ENCODE measurements at regions of chr3 and their contacts with region 1.

Region 1: DNA sequence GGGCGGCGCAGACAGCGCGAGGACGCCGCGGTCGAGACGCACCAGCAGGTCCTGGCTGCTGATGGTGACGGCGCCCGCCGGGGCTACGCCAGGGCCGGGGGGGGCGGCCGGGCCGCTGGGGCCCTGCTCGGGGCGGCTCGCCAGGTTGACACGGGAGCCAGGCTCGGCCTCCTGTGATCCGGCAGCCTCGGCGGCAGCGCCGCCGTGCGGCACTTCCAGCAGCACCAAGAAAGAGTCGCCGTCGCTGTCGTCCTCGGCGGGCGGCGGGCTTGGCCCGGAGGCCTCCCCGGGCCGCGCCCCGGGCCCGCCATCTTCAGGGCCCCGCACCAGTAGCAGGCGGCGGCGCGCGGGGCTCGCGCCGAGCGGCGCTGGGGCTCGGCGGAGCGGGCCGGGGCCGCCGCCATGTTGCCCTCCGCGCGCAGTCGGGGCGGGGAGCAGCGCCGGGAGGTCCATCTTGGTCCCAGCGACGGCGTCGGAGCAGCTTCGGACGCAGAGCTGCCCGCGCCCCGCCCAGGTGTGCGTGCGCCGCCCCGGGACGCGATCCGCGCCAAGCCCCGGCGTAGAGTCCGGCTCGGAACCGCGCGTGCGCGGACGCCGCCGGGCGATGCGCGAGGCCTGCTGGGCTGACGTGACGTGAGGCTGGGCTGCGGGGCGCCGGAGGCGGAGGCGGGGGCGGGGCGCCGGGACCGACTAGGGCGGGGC is at the start of gene ZXDC:
- DNase-seq: peak; percentile 92
- H3K4me3 Mint-ChIP-seq: peak within 1 kb of the TSS; percentile 93
- H3K27ac Mint-ChIP-seq: peak within 1 kb of the TSS; percentile 88
- H3K4me1 Mint-ChIP-seq: peaks cover 28% of the 10 kb centered on the region
- H3K27me3 Mint-ChIP-seq: peaks cover under 1% of the 10 kb centered on the region
- total RNA-seq, gene ZXDC: 29.2 and 29.4 TPM in 2 replicates

Region 2: DNA sequence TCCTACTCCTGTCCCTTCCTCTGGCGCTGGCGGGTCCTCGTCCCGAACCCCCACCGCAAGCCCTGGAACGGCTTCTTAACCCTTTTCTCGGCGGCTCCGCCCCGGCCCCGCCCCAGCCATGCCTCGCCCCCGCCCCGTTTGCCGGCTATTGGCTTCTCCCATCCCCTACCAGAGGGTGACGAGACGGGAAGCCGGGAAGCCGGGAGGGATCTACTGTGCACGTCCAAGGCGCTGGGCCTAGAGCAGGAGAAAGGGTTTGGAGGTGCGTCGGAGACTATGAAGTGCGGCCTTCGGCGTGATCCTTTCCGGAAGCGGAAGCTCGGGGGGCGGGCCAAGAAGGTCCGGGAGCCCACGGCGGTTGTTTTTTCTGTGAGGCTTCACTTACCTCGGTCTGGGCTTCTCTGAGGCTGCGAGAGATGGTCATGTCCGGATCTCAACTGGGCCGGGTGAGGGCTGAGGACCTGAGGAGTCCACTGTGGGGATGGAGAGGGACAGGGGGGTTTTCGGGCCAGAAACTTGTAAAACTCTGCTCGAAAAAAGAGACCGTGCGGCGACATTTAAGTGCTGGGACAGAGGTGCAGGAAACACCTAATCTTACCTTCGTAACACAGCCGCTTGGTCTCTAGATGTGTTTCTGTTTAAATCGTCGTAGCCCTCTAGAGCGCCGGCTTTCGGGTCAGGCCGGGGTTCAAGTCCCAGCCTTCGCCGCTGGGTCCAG is 485.2 kb before region 1 on chr3:
- intact Hi-C with region 1: loop called (anchors 5 kb)
- DNase-seq: peak; percentile 68
- H3K4me3 Mint-ChIP-seq: peak overlapping the region; percentile 90
- H3K27ac Mint-ChIP-seq: peak overlapping the region; percentile 88
- H3K4me1 Mint-ChIP-seq: peaks cover 16% of the 10 kb centered on the region
- H3K27me3 Mint-ChIP-seq: peaks cover 15% of the 10 kb centered on the region

Region 3: DNA sequence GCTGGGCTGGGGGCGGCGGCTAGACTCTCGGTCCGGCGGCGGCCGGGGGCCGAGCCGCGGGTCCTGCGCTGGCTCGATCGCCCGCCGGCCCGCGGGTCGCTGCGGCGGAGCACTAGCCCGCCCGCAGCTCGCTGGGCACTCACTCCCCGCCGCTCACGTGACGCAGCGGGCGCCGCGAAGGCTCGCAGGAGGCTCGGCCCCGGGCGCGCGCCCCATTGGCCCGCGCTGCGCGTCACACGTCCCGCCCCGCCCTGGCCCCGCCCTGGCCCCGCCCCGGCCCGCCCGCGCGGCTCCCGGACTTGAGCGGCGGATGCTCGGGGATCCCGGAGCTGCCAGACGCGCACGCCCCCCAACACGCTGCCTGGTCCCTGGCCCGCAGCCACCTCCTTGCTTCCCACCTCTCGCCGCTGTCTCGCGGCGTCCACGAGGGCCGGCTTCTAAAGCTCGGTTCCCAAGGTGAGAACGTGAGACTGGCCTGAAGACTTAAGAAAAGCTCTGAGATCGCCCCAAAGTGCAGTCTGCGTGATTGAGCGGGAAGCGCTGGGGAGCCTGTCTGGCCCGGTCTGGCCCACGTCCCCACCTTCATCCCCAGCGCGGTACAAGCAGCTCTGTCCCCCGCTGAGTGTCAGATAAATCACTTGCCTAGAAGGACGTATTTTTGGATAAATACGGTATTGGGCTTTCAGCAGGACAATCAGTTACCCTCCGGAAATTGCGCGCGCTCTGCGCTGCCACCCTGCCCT is 118.1 kb before region 1 on chr3 and contains the start of gene KLF15:
- intact Hi-C with region 1: loop called (anchors 1 kb)
- DNase-seq: peak; percentile 73
- H3K4me3 Mint-ChIP-seq: peak within 1 kb of the TSS; percentile 84
- H3K27ac Mint-ChIP-seq: peak within 1 kb of the TSS; percentile 48
- H3K4me1 Mint-ChIP-seq: peaks cover 8% of the 10 kb centered on the region
- H3K27me3 Mint-ChIP-seq: peaks cover 46% of the 10 kb centered on the region
- total RNA-seq, gene KLF15: 0.08 and 0.22 TPM in 2 replicates

Region 4: GRCh38 chr3:126758026-126758425 is 282.5 kb after region 1 on chr3:
- intact Hi-C with region 1: no loop called
- DNase-seq: no peak
- H3K4me3 Mint-ChIP-seq: no peak overlapping the region
- H3K27ac Mint-ChIP-seq: no peak overlapping the region
- H3K4me1 Mint-ChIP-seq: no peaks in the 10 kb centered on the region
- H3K27me3 Mint-ChIP-seq: peaks cover 4% of the 10 kb centered on the region

Region 5: GRCh38 chr3:126911162-126912026 is 435.8 kb after region 1 on chr3:
- intact Hi-C with region 1: loop called (anchors 2 kb)
- DNase-seq: peak; percentile 81
- H3K4me3 Mint-ChIP-seq: peak overlapping the region; percentile 67
- H3K27ac Mint-ChIP-seq: peak overlapping the region; percentile 73
- H3K4me1 Mint-ChIP-seq: peaks cover 62% of the 10 kb centered on the region
- H3K27me3 Mint-ChIP-seq: no peaks in the 10 kb centered on the region

Region 6: DNA sequence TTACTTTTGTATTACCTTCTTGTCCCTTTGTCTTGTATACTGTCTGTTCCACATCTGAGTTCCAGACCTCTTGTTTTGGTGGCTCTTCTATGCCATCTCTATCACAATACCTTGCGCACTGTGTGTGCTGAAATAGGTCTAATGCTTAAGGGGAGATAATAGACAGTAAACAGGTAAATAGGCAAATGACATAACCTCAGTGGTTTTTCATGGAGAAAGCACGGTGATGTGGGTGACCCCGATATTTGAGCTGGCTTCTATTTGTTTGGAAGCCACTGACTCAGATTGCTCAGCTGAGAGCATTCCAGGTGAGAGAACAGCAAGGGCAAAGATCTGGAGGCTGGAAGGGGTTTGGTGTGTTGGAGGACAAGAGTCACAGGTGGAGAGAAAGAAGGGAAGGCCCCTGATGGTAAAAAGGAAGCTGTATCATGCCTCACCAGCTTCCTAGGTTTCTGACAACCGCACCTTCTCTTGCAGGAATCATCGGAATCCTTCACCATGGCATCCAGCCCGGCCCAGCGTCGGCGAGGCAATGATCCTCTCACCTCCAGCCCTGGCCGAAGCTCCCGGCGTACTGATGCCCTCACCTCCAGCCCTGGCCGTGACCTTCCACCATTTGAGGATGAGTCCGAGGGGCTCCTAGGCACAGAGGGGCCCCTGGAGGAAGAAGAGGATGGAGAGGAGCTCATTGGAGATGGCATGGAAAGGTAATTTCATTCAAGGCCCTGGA is 1123.4 kb after region 1 on chr3:
- intact Hi-C with region 1: loop called (anchors 1 kb)
- DNase-seq: no peak
- H3K4me3 Mint-ChIP-seq: peak overlapping the region; percentile 100
- H3K27ac Mint-ChIP-seq: peak overlapping the region; percentile 99
- H3K4me1 Mint-ChIP-seq: peaks cover 45% of the 10 kb centered on the region
- H3K27me3 Mint-ChIP-seq: no peaks in the 10 kb centered on the region

Region 7: GRCh38 chr3:128153156-128154041 is 1677.8 kb after region 1 on chr3 and contains the start of gene EEFSEC:
- intact Hi-C with region 1: loop called (anchors 2 kb)
- DNase-seq: peak; percentile 82
- H3K4me3 Mint-ChIP-seq: peak within 1 kb of the TSS; percentile 94
- H3K27ac Mint-ChIP-seq: peak within 1 kb of the TSS; percentile 98
- H3K4me1 Mint-ChIP-seq: peaks cover 31% of the 10 kb centered on the region
- H3K27me3 Mint-ChIP-seq: peaks cover 3% of the 10 kb centered on the region
- total RNA-seq, gene EEFSEC: 18.7 and 19.5 TPM in 2 replicates